Ovary (tissue), 10 donors: ENCODE measurements at regions of chr1 and their contacts with region 1.

Region 1: DNA sequence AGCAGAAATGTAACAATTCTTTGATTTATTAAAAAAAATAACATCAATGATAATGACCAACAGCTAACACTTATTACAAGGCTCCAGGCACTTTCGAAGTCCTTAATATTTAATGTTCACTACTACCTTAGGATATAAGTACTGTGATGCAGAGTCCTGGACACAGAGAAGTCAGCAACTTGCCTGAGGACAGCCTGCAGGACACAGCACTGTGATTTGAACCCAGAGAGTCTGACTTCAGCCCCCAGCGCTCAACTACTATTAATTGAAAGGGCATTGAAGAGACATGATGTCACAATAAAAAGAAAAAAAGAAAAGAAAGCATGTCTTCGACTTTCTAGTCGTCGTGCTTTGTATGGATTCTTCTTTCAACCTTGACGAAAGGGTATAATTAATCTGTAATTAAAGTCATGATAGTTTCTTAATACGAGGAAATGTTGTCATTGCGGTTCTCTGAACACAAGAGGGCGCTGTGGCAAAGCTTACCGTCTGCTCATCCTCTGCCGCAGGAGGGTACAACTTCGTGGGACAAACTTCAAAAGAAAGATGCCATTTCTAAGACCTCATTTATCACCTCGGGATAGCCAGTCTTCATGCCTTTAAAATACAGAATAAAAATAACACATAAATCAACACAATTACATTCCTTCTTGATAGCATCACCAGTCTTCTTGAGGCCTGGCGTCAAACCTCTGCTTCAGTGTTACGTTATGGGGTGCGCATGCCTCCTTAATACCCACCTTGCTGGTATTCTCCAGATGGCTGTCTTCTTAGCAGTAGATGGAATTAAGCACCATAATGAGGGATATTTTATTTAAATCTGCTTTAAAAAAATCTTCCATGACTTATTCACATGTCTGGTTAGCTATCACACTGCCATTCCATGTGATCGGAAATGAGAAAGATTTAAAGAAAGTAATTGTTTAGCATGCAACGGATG is 240.1 kb downstream of the DISC1 start:
- DNase-seq: peak; percentile 47 to 73 (median 70)
- H3K4me3 ChIP-seq: no peak overlapping the region
- H3K27ac ChIP-seq: peak overlapping the region in 1 of 2 donors; percentile 60
- H3K4me1 ChIP-seq: peaks cover 8% of the 10 kb centered on the region
- H3K27me3 ChIP-seq: no peaks in the 10 kb centered on the region
- CTCF ChIP-seq: peak; percentile 70 to 75 (median 74)
- EP300 ChIP-seq: no peak
- POLR2A ChIP-seq: no peak

Region 2: GRCh38 chr1:231757101-231757404 is 109.6 kb before region 1 on chr1:
- intact Hi-C with region 1: loop called in 1 of 4 experiments (anchors 10 kb)
- DNase-seq: no peak
- H3K4me3 ChIP-seq: no peak overlapping the region
- H3K27ac ChIP-seq: no peak overlapping the region
- H3K4me1 ChIP-seq: no peaks in the 10 kb centered on the region
- H3K27me3 ChIP-seq: no peaks in the 10 kb centered on the region
- CTCF ChIP-seq: no peak
- EP300 ChIP-seq: no peak
- POLR2A ChIP-seq: no peak

Region 3: GRCh38 chr1:232630047-232630893 is 763.6 kb after region 1 on chr1 and contains the start of gene SIPA1L2:
- intact Hi-C with region 1: loop called in 2 of 4 experiments (anchors 5 to 10 kb)
- DNase-seq: peak; percentile 93 to 97 (median 96)
- H3K4me3 ChIP-seq: peak within 1 kb of the TSS; percentile 73
- H3K27ac ChIP-seq: peak within 1 kb of the TSS; percentile 69 to 89
- H3K4me1 ChIP-seq: no peaks in the 10 kb centered on the region
- H3K27me3 ChIP-seq: no peaks in the 10 kb centered on the region
- CTCF ChIP-seq: peak; percentile 7 to 46 (median 40)
- EP300 ChIP-seq: no peak
- POLR2A ChIP-seq: no peak
- total RNA-seq, gene SIPA1L2: 12.9 to 52.9 (median 31.7) TPM